CD4-positive, alpha-beta T cell (primary cell): ENCODE measurements at regions of chr7 and their contacts with region 1.

Region 1: GRCh38 chr7:89622838-89623672 is 531.2 kb upstream of the STEAP1 start:
- DNase-seq: peak in 5 of 14 experiments; percentile 0 to 58 (median 37)
- ATAC-seq: peak; percentile 67
- H3K4me3 ChIP-seq: no peak overlapping the region
- H3K4me3 Mint-ChIP-seq: no peak overlapping the region
- H3K27ac ChIP-seq: no peak overlapping the region
- H3K27ac Mint-ChIP-seq: no peak overlapping the region
- H3K4me1 ChIP-seq: peaks cover 16% of the 10 kb centered on the region
- H3K4me1 Mint-ChIP-seq: peaks cover 27% of the 10 kb centered on the region
- H3K27me3 ChIP-seq: no peaks in the 10 kb centered on the region
- H3K27me3 Mint-ChIP-seq: no peaks in the 10 kb centered on the region
- CTCF ChIP-seq: peak; percentile 67

Region 2: DNA sequence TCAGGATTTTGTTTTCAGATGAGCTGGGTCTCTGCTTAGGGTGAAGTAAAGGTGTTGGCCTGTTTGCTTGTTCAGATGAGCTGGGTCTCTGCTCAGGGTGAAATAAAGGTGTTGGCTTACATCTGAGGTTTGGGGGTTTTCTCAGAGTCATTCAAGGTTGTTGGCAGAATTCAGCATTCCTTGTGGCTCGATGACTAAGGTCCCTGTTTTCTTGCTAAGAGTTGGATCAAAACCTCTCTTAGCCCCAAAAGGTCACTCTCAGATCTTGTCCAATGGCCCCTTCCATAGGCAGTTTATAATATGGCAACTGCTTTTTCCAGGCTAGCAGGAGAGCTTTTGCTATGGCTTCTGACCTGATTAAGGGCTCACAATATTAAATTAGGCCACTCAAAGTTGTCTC is 1582.4 kb before region 1 on chr7:
- CTCF ChIA-PET with region 1: no interaction called
- POLR2A ChIA-PET with region 1: no interaction called
- intact Hi-C with region 1: no loop called
- DNase-seq: no peak
- ATAC-seq: no peak
- H3K4me3 ChIP-seq: no peak overlapping the region
- H3K4me3 Mint-ChIP-seq: no peak overlapping the region
- H3K27ac ChIP-seq: no peak overlapping the region
- H3K27ac Mint-ChIP-seq: no peak overlapping the region
- H3K4me1 ChIP-seq: no peaks in the 10 kb centered on the region
- H3K4me1 Mint-ChIP-seq: peaks cover 10% of the 10 kb centered on the region
- H3K27me3 ChIP-seq: no peaks in the 10 kb centered on the region
- H3K27me3 Mint-ChIP-seq: no peaks in the 10 kb centered on the region
- CTCF ChIP-seq: no peak

Region 3: DNA sequence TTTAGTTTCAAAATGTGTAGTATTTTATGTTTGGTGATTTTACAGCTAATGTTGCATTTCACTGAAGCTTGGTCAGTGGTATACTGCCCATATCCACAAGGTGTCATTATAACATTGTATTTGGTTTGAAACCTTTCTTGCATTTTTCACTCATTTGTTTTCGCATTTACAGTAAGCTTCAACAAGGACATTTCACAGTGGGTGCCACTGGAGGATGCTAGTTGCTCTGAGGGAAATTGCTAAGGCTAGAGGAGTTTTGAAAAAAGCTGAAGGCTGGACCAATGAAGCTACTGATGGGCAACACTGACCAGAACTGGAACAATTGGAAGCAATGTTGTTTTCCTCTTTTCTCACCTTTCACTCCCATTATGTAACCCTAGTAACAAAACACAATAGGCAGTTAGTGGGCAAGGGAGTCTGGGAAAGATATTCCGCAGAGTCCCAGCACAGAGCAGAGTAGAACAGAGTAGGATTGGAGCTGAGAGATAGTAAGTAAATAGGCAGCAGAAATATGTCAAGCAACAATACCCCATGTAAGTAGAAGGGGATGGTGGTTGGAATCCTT is 1379.6 kb before region 1 on chr7:
- CTCF ChIA-PET with region 1: no interaction called
- POLR2A ChIA-PET with region 1: no interaction called
- intact Hi-C with region 1: loop called in 1 of 2 experiments (anchors 5 kb)
- DNase-seq: peak in 3 of 14 experiments; percentile 25 to 34 (median 31)
- ATAC-seq: peak; percentile 43
- H3K4me3 ChIP-seq: no peak overlapping the region
- H3K4me3 Mint-ChIP-seq: no peak overlapping the region
- H3K27ac ChIP-seq: no peak overlapping the region
- H3K27ac Mint-ChIP-seq: no peak overlapping the region
- H3K4me1 ChIP-seq: no peaks in the 10 kb centered on the region
- H3K4me1 Mint-ChIP-seq: no peaks in the 10 kb centered on the region
- H3K27me3 ChIP-seq: no peaks in the 10 kb centered on the region
- H3K27me3 Mint-ChIP-seq: peaks cover 8% of the 10 kb centered on the region
- CTCF ChIP-seq: no peak

Region 4: GRCh38 chr7:88789480-88790064 is 833.5 kb before region 1 on chr7:
- CTCF ChIA-PET with region 1: no interaction called
- POLR2A ChIA-PET with region 1: no interaction called
- intact Hi-C with region 1: loop called (anchors 1 to 5 kb)
- DNase-seq: peak in 3 of 14 experiments; percentile 18 to 30 (median 27)
- ATAC-seq: no peak
- H3K4me3 ChIP-seq: no peak overlapping the region
- H3K4me3 Mint-ChIP-seq: no peak overlapping the region
- H3K27ac ChIP-seq: no peak overlapping the region
- H3K27ac Mint-ChIP-seq: no peak overlapping the region
- H3K4me1 ChIP-seq: no peaks in the 10 kb centered on the region
- H3K4me1 Mint-ChIP-seq: no peaks in the 10 kb centered on the region
- H3K27me3 ChIP-seq: no peaks in the 10 kb centered on the region
- H3K27me3 Mint-ChIP-seq: no peaks in the 10 kb centered on the region
- CTCF ChIP-seq: peak; percentile 57

Region 5: GRCh38 chr7:88967432-88967831 is 655.6 kb before region 1 on chr7:
- CTCF ChIA-PET with region 1: no interaction called
- POLR2A ChIA-PET with region 1: no interaction called
- intact Hi-C with region 1: no loop called
- DNase-seq: no peak
- ATAC-seq: no peak
- H3K4me3 ChIP-seq: no peak overlapping the region
- H3K4me3 Mint-ChIP-seq: no peak overlapping the region
- H3K27ac ChIP-seq: no peak overlapping the region
- H3K27ac Mint-ChIP-seq: no peak overlapping the region
- H3K4me1 ChIP-seq: no peaks in the 10 kb centered on the region
- H3K4me1 Mint-ChIP-seq: no peaks in the 10 kb centered on the region
- H3K27me3 ChIP-seq: no peaks in the 10 kb centered on the region
- H3K27me3 Mint-ChIP-seq: no peaks in the 10 kb centered on the region
- CTCF ChIP-seq: no peak

Region 6: GRCh38 chr7:89334797-89335196 is 288.3 kb before region 1 on chr7:
- CTCF ChIA-PET with region 1: no interaction called
- POLR2A ChIA-PET with region 1: no interaction called
- intact Hi-C with region 1: loop called in 1 of 2 experiments (anchors 10 kb)
- DNase-seq: no peak
- ATAC-seq: no peak
- H3K4me3 ChIP-seq: no peak overlapping the region
- H3K4me3 Mint-ChIP-seq: no peak overlapping the region
- H3K27ac ChIP-seq: no peak overlapping the region
- H3K27ac Mint-ChIP-seq: no peak overlapping the region
- H3K4me1 ChIP-seq: no peaks in the 10 kb centered on the region
- H3K4me1 Mint-ChIP-seq: no peaks in the 10 kb centered on the region
- H3K27me3 ChIP-seq: no peaks in the 10 kb centered on the region
- H3K27me3 Mint-ChIP-seq: no peaks in the 10 kb centered on the region
- CTCF ChIP-seq: no peak

Region 7: DNA sequence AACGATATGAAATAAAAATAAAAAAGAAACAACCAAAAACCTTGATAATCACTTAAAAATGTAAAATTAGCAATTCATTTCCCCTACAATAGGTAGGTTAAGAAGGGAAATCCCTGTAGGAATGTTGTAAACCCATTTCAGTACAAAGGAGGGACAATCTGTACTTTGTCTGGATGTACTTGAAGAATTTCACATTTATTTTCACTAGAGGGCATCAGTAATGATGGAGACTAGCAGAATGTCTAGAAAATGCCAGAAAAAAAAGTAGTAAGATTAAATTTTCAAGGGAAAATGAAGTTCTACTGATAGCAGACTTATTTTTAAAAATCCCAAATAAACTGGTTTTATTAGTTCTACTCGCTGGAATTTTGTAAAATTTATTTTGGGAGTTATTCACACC is 1432.2 kb after region 1 on chr7:
- CTCF ChIA-PET with region 1: no interaction called
- POLR2A ChIA-PET with region 1: no interaction called
- intact Hi-C with region 1: no loop called
- DNase-seq: no peak
- ATAC-seq: no peak
- H3K4me3 ChIP-seq: no peak overlapping the region
- H3K4me3 Mint-ChIP-seq: no peak overlapping the region
- H3K27ac ChIP-seq: no peak overlapping the region
- H3K27ac Mint-ChIP-seq: no peak overlapping the region
- H3K4me1 ChIP-seq: no peaks in the 10 kb centered on the region
- H3K4me1 Mint-ChIP-seq: peaks cover 15% of the 10 kb centered on the region
- H3K27me3 ChIP-seq: no peaks in the 10 kb centered on the region
- H3K27me3 Mint-ChIP-seq: no peaks in the 10 kb centered on the region
- CTCF ChIP-seq: no peak